ENCODE measurements at regions of chr13 and their contacts with region 1.

Region 1: DNA sequence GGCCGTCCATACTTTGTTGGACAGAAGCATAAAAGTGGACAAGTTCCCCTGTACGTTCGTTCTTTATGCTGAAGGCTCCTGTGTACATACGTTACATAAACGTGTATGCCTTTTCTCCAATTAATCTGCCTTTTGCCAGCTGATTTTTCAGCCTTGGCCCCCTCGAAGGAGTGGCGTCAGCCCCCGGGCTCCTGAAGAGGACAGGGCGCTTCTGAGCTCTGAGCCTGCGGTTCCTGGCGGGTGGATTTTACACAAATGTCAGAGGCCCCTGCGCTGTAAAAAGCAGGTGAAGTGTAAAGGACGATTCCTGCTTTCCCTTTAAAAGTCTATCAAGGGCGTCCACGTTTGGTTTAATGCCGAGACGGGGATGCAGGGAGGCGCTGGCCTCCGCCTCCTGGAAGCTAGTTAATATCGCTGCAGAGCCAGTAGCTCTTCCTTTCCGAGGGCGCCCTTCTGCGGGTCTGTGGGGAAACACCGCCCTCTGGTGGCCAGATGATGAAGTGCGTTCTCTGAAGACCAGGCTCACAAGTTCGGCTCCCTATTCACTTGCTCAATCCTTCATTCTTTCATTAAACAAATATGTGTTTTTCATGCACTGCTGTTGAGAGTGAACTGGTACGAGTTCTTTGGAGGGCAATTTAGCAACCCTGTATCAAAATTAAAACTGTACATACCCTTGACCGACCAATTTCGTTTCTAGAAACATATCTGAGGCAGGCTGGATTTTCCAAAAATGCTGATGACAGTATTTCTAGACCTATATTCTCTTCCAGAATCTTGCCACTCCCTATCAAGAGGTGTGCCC is 62.0 kb downstream of the GPR12 start:
- DNase-seq: peak; percentile 91
- H3K4me3 ChIP-seq: peak overlapping the region in 1 of 4 donors; percentile 18
- H3K27ac ChIP-seq: no peak overlapping the region
- H3K4me1 ChIP-seq: no peaks in the 10 kb centered on the region
- H3K27me3 ChIP-seq: no peaks in the 10 kb centered on the region
- CTCF ChIP-seq: peak; percentile 83 to 95 (median 94)
- EP300 ChIP-seq: no peak
- POLR2A ChIP-seq: no peak

Region 2: DNA sequence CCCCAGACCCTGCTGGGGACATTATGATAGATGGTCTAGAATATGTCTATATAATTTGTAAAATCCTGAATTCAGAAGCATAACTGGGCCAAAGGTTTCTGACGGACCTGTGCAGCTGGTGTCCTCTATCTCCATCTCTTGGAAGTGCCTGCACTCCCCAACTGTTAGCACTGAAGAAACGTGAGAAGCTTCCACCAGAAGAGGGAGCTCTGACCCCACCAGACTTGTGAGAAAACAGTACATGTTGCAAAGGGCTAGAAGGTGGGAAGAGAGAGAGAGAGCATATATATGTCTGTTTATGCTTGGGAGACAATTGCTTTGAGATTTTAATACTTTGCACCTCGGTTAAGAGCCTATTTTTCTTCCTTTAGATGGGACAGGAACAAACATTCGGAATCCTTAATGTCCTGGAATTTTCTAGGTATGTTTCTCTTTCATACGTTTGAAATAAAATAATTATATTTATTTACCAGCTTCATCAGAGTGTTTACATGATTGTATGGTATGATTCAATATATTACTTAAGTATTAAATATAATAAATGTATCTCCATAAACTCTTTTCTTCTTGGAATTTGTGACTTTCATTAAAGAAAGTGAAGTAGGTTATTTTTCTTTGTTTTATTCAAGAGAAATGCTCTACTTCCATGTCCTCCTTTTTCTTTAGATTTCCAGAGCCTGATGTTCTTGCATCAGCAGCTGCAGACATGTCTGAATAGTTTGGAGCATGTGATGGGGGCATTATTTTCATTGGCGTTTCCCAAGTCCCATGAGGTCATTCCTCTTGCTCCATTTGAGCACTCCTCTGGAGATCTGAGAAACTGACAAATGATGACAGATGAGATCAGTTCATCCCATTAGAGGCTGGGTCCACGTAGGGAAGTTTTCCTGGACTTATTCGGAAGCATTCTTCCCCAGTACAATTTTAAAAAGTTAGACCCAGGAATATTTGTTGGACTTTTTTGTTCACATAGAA is 1123.9 kb before region 1 on chr13:
- intact Hi-C with region 1: loop called (anchors 5 kb)
- DNase-seq: peak; percentile 79
- H3K4me3 ChIP-seq: no peak overlapping the region
- H3K27ac ChIP-seq: no peak overlapping the region
- H3K4me1 ChIP-seq: no peaks in the 10 kb centered on the region
- H3K27me3 ChIP-seq: peaks cover 0 to 2% (median 0%) of the 10 kb centered on the region in 3 donors
- CTCF ChIP-seq: peak; percentile 43 to 72 (median 58)
- EP300 ChIP-seq: no peak
- POLR2A ChIP-seq: no peak

Region 3: GRCh38 chr13:26498656-26499591 is 199.7 kb before region 1 on chr13:
- intact Hi-C with region 1: loop called (anchors 5 kb)
- DNase-seq: peak; percentile 47
- H3K4me3 ChIP-seq: no peak overlapping the region
- H3K27ac ChIP-seq: no peak overlapping the region
- H3K4me1 ChIP-seq: peaks cover 0 to 27% (median 19%) of the 10 kb centered on the region in 4 donors
- H3K27me3 ChIP-seq: no peaks in the 10 kb centered on the region
- CTCF ChIP-seq: no peak
- EP300 ChIP-seq: no peak
- POLR2A ChIP-seq: no peak

Region 4: GRCh38 chr13:26557393-26558023 is 141.1 kb before region 1 on chr13 and contains the start of gene WASF3:
- intact Hi-C with region 1: loop called (anchors 5 kb)
- DNase-seq: peak; percentile 97
- H3K4me3 ChIP-seq: peak within 1 kb of the TSS; percentile 78 to 91 (median 84)
- H3K27ac ChIP-seq: peak within 1 kb of the TSS; percentile 59 to 83 (median 78)
- H3K4me1 ChIP-seq: peaks cover 0 to 15% (median 8%) of the 10 kb centered on the region in 4 donors
- H3K27me3 ChIP-seq: no peaks in the 10 kb centered on the region
- CTCF ChIP-seq: no peak
- EP300 ChIP-seq: no peak
- POLR2A ChIP-seq: no peak
- total RNA-seq, gene WASF3: 12.4 to 17.1 (median 14.6) TPM